Right lobe of liver (tissue), 6 donors: ENCODE measurements at regions of chr5 and their contacts with region 1.

Region 1: GRCh38 chr5:73587923-73588322 is 22.4 kb downstream of the UTP15 start:
- DNase-seq: no peak
- ATAC-seq: no peak
- H3K4me3 ChIP-seq: no peak overlapping the region
- H3K27ac ChIP-seq: no peak overlapping the region
- H3K4me1 ChIP-seq: no peaks in the 10 kb centered on the region
- H3K27me3 ChIP-seq: no peaks in the 10 kb centered on the region
- CTCF ChIP-seq: no peak
- POLR2A ChIP-seq: no peak

Region 2: DNA sequence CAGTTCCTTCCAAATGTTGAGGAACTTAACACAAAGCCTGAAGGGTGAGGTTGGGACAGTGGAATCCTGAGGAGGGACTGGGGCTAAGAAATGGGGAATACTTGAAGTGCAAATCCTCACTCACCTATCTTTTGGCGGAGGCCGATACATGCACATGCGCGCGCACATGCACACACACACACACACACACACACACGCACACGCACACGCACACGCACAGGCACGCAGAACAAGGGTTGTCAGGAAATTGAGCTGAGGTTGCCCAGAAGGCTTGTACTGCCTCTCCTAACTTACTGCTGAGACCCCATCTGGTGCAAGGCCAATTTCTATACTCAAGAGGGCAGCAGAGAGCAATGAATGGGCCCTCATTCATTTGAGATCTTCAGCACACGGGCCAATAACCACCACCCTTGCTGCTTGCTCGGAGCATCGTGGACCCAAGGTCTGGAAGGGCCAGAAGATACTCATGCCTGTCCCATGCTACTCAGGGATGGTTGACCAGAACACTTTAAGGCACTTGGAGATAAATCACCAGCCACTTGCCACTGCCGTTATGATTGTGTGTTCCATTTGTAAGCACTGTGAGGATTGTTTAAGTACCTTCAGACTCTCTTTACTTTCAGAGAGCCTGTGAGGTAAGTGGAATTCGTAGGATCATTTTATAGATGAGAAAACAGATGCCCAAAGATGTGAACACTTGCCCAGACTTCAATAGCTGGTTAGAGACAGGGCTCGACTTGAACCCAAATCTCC is 68.2 kb before region 1 on chr5:
- intact Hi-C with region 1: no loop called
- DNase-seq: peak in 1 of 3 donors; percentile 63
- ATAC-seq: peak; percentile 99 to 100 (median 99)
- H3K4me3 ChIP-seq: no peak overlapping the region
- H3K27ac ChIP-seq: no peak overlapping the region
- H3K4me1 ChIP-seq: no peaks in the 10 kb centered on the region
- H3K27me3 ChIP-seq: no peaks in the 10 kb centered on the region
- CTCF ChIP-seq: peak; percentile 58 to 69 (median 66)
- POLR2A ChIP-seq: no peak

Region 3: GRCh38 chr5:73792687-73793320 is 204.9 kb after region 1 on chr5:
- intact Hi-C with region 1: loop called (anchors 5 kb)
- DNase-seq: peak; percentile 61 to 77 (median 64)
- ATAC-seq: peak; percentile 95 to 98 (median 96)
- H3K4me3 ChIP-seq: no peak overlapping the region
- H3K27ac ChIP-seq: no peak overlapping the region
- H3K4me1 ChIP-seq: no peaks in the 10 kb centered on the region
- H3K27me3 ChIP-seq: no peaks in the 10 kb centered on the region
- CTCF ChIP-seq: peak; percentile 96 to 98 (median 96)
- POLR2A ChIP-seq: no peak